ENCODE measurements at regions of chr12 and their contacts with region 1.

Region 1: GRCh38 chr12:26884765-26885576 is 52.0 kb upstream of the ITPR2 start:
- DNase-seq: peak; percentile 37 to 91
- H3K4me3 ChIP-seq: no peak overlapping the region
- H3K27ac ChIP-seq: no peak overlapping the region
- H3K4me1 ChIP-seq: no peaks in the 10 kb centered on the region
- H3K27me3 ChIP-seq: no peaks in the 10 kb centered on the region
- CTCF ChIP-seq: peak; percentile 80 to 91 (median 91)

Region 2: GRCh38 chr12:26853303-26854030 is 31.5 kb before region 1 on chr12:
- intact Hi-C with region 1: loop called (anchors 1 kb)
- DNase-seq: peak in 1 of 2 donors; percentile 81
- H3K4me3 ChIP-seq: no peak overlapping the region
- H3K27ac ChIP-seq: no peak overlapping the region
- H3K4me1 ChIP-seq: no peaks in the 10 kb centered on the region
- H3K27me3 ChIP-seq: no peaks in the 10 kb centered on the region
- CTCF ChIP-seq: peak; percentile 73 to 82 (median 75)

Measured in ascending aorta (tissue), 2 donors.